ENCODE measurements at regions of chr16 and their contacts with region 1.

Region 1: DNA sequence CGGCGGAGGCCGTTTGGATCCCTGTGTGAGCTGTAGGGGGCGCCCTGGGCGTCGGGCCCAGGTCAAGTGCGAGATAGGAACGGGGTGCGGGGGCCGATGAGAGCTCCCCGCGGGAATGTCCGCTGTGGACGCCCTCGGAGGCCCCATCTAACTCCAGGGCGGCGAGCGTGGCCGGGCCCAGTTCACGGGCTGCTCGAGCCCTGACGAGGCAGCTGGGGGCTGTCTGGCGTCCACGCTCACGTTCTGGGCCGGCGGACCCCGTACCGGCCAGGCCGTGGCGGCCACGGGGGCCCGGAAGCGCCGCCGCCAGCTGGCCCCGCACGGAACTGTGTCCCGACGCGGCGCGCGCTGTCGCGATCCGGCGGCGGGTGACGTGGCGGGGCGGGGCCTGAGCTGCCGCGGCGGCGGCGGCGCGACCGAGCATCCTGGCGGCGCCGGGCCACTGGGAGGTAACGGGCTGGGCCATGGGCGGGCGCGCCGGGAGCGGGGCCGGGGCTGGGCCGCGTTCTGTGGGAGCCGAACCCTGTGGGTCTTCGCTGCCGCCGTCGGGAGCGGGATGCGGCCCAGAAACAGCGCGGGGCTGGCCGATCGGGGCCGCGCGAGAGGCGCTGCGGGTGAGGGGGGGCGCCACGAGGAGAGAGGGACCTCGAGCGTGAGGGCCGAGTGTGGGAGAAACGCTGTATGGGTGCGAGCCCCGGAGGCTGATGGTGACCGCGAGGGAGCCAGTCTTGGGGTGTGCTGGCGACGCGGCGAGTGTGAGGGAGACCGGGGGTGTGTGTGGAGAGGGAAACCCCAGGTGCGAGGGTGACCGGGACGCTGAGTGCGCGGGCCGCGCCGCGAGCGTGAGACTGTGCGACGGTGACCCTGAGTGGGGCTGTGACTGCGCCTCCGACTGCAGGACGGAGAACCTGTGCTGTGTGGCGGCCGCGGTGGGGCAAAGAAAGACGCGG is at the start of gene SLC7A6:
- DNase-seq: peak; percentile 53 to 76
- ATAC-seq: peak; percentile 49 to 55
- H3K4me3 ChIP-seq: peak within 1 kb of the TSS; percentile 84 to 96 (median 94)
- H3K27ac ChIP-seq: peak within 1 kb of the TSS; percentile 95 to 100 (median 99)
- H3K4me1 ChIP-seq: peaks cover 43 to 69% of the 10 kb centered on the region in 2 donors
- H3K27me3 ChIP-seq: no peaks in the 10 kb centered on the region
- CTCF ChIP-seq: peak; percentile 72 to 89 (median 83)
- POLR2A ChIP-seq: peak; percentile 97 to 99
- total RNA-seq, gene SLC7A6: 97.3 to 205 (median 117) TPM

Region 2: DNA sequence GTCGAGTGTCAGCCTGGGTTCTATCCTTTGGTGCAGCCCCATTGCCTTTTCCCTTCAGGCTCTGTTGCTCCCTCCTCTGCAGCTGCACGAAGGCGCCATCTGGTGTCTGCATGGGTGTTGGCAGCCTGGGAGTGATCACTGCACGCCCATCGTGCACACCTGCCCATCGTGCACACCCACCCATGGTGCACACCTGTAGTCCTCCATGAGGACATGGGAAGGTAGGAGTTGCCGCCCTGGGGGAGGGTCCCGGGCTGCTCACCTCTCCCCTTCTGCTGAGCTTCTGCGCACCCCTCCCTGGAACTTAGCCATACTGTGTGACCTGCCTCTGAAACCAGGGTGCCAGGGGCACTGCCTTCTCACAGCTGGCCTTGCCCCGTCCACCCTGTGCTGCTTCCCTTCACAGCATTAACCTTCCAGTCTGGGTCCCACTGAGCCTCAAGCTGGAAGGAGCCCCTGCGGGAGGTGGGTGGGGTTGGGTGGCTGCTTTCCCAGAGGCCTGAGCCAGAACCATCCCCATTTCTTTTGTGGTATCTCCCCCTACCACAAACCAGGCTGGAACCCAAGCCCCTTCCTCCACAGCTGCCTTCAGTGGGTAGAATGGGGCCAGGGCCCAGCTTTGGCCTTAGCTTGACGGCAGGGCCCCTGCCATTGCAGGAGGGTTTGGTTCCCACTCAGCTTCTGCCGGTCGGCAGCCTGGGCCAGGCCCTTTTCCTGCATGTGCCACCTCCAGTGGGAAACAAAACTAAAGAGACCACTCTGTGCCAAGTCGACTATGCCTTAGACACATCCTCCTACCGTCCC is 335.6 kb before region 1 on chr16:
- in situ Hi-C with region 1: no loop called
- intact Hi-C with region 1: no loop called
- DNase-seq: peak; percentile 46 to 65
- ATAC-seq: peak; percentile 59 to 61
- H3K4me3 ChIP-seq: no peak overlapping the region
- H3K27ac ChIP-seq: peak overlapping the region in 2 of 4 donors; percentile 60 to 66
- H3K4me1 ChIP-seq: peaks cover 29 to 34% of the 10 kb centered on the region in 2 donors
- H3K27me3 ChIP-seq: no peaks in the 10 kb centered on the region
- CTCF ChIP-seq: peak; percentile 88 to 95 (median 93)
- POLR2A ChIP-seq: no peak

Region 3: GRCh38 chr16:68244903-68245853 is 19.2 kb before region 1 on chr16 and contains the start of gene PLA2G15:
- in situ Hi-C with region 1: no loop called
- intact Hi-C with region 1: loop called (anchors 2 kb)
- DNase-seq: peak; percentile 96 to 97
- ATAC-seq: peak; percentile 58 to 63
- H3K4me3 ChIP-seq: peak within 1 kb of the TSS; percentile 68 to 97 (median 92)
- H3K27ac ChIP-seq: peak within 1 kb of the TSS; percentile 95 to 100 (median 99)
- H3K4me1 ChIP-seq: peaks cover 42 to 52% of the 10 kb centered on the region in 2 donors
- H3K27me3 ChIP-seq: no peaks in the 10 kb centered on the region
- CTCF ChIP-seq: no peak
- POLR2A ChIP-seq: peak; percentile 98 to 99
- total RNA-seq, gene PLA2G15: 67.8 to 91.3 (median 84.8) TPM

Region 4: DNA sequence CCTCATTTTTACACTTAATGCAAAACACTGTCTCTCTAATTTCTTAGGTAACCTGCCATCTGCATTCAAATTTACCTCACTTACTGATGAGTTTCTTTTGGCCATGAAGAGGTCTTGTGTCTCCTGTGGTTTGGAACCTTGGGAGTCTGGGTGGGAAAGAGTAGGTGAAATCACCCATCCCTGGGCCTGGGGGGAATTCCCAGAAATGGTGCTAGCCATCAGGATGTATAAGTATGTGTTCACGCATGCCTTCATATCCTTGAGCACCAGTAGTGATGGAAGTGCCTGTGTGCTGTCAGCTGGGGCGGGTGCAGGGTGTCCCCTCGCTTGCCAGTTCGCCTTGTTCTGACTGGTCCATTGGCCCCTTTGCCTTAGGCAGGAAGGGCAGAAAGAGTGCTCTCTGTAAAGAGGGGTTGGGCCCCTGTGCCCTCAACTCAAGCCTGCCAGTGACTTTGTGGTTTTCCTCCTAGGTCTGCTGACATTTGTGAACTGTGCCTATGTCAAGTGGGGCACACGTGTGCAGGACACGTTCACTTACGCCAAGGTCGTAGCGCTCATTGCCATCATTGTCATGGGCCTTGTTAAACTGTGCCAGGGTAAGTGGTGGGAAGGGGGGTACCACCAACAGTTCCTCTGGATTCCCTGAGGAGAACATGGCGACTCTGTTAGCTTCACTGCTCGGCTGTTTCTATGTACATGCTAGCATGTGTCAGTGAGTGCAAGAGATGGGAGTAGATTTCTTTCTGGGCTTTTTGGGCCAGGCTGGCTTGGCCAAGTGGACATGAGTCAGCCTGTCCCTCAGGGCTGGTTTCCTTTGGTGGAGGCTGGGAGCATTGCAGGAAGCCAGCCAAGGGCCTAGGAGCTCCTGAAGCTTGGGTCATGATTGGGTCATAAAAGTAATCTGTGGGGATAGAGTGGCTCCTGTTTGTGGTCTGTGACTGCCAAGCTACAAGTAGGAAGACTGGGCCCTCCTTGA is 23.2 kb after region 1 on chr16:
- in situ Hi-C with region 1: no loop called
- intact Hi-C with region 1: loop called (anchors 2 kb)
- DNase-seq: peak; percentile 96 to 99
- ATAC-seq: peak; percentile 73 to 77
- H3K4me3 ChIP-seq: no peak overlapping the region
- H3K27ac ChIP-seq: peak overlapping the region; percentile 86 to 99 (median 95)
- H3K4me1 ChIP-seq: peaks cover 80 to 83% of the 10 kb centered on the region in 2 donors
- H3K27me3 ChIP-seq: no peaks in the 10 kb centered on the region
- CTCF ChIP-seq: peak in 4 of 5 experiments; percentile 20 to 50 (median 36)
- POLR2A ChIP-seq: peak; percentile 48 to 60

Region 5: DNA sequence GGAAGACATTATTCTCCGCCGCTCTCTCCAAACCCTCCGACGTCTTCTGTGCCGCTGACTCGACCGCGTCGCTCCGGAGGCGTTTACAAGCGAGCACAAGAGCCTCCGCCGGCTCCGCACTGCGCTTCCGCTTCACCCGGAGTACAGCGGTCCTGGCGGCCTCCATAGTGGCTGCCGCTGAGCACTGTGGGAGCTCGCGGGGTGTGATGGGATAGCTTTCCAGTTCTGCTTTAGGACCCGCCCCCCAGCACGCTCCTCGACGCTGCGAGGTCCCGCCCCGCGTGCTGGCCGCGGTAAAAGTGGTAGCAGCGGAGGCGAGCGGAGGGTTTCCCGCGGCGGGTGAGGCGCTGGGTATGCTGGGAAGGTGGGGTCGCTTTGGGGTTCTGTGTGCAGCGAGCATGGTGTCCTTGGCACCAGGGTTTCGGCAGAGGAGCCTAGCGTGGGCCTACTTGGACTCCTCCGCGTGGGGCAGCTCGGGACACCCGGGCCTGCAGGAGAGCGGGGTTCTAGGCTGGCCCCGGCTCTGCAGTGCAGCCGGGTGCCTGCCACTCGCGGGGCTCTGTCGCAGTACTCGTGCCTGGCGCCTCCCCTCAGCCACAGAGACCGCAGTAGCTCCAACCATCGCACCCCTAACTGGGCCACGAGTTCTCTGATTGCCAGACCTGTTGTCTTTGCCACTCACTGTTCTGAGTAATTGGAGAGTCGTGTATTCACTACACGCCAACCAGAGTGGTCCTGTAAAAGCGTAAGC is 46.5 kb after region 1 on chr16 and contains the starts of genes PRMT7 and SLC7A6OS:
- in situ Hi-C with region 1: no loop called
- intact Hi-C with region 1: loop called (anchors 5 kb)
- DNase-seq: peak; percentile 84 to 88
- ATAC-seq: peak; percentile 92 to 95
- H3K4me3 ChIP-seq: peak within 1 kb of the TSS; percentile 71 to 98 (median 82)
- H3K27ac ChIP-seq: peak within 1 kb of the TSS; percentile 87 to 91 (median 90)
- H3K4me1 ChIP-seq: peaks cover 28 to 41% of the 10 kb centered on the region in 2 donors
- H3K27me3 ChIP-seq: no peaks in the 10 kb centered on the region
- CTCF ChIP-seq: peak in 4 of 5 experiments; percentile 25 to 62 (median 44)
- POLR2A ChIP-seq: peak; percentile 87 to 88
- total RNA-seq, gene PRMT7: 22.2 to 41.0 (median 32.8) TPM
- total RNA-seq, gene SLC7A6OS: 5.0 to 8.8 (median 7.3) TPM

Measured in gastrocnemius medialis (tissue), 4 donors.